Sciatic nerve (tissue), 2 donors: ENCODE measurements at regions of chr14 and their contacts with region 1.

Region 1: DNA sequence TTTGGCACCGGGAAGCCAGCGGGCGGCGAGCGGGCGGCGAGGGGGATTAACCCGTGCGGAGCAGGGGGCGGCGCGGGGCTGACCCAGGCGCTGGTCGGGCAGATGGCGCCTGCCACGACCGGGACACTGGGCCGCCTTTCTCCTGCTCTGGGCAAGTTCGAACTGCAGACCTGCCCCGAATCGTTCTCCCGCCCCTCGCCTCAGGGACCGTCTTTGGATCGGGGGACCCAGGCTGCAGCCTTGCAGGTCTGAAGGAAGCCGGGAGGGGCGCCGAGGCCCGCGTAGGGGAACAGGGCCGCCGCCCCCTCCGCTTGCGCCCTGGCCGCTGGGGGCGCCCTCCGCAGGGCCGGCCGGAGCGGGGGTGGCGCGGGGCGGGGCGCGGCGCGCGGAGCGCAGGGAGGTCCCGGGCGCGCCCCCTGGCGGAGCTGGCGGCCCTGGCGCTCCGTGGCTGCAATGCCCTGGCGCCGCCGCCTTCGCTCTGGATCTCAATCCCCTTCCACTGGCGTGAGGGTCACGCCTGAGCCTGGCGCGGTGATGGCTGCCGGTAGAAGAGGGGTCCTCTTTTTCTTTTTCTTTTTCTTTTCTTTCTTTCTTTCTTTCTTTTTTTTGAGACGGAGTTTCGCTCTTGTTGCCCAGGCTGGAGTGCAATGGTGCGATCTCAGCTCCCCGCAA is 449 bp upstream of the LTBP2 start:
- DNase-seq: peak; percentile 86
- ATAC-seq: peak; percentile 74

Region 2: GRCh38 chr14:74501135-74501614 is 111.3 kb before region 1 on chr14:
- intact Hi-C with region 1: loop called (anchors 5 kb)
- DNase-seq: peak; percentile 89
- ATAC-seq: peak; percentile 81

Region 3: GRCh38 chr14:74593241-74593953 is 19.1 kb before region 1 on chr14:
- intact Hi-C with region 1: no loop called
- DNase-seq: no peak
- ATAC-seq: peak; percentile 49

Region 4: GRCh38 chr14:74641601-74642391 is 29.3 kb after region 1 on chr14:
- intact Hi-C with region 1: no loop called
- DNase-seq: no peak
- ATAC-seq: peak; percentile 47

Region 5: GRCh38 chr14:74684434-74684833 is 71.9 kb after region 1 on chr14:
- intact Hi-C with region 1: no loop called
- DNase-seq: no peak
- ATAC-seq: peak; percentile 32

Region 6: DNA sequence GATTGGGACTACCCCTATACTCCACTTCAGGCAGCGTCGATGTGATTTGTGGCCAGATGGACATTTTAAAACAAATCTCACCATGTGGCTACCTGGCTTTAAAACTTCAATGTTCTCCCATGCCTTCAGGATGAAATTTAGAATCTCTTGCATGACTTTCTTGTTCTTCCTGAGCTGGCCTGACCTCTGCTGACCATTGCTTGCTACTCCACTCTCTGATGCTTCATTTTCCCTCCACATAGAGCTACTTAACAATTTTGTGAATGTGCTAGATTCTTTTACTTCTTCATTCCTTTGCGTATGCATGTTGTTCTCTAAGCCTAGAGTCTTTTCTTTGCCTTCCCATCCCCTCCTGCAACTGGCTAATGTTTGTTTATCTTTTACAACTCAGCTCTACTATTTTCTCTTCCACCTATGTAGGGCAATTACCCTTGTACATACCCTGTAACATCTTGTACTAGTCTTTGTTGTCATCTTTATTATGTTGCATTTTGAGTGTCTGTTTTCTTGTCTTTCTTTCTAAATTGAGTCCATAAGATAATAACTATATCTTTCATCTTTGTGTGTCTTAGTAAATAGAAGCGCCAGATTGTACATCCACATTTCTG is 191.8 kb after region 1 on chr14:
- intact Hi-C with region 1: loop called (anchors 10 kb)
- DNase-seq: no peak
- ATAC-seq: peak; percentile 65